Activated CD4-positive, alpha-beta T cell treated with anti-CD3 and anti-CD28 coated beads for 36 hours (primary cell): ENCODE measurements at regions of chr2 and their contacts with region 1.

Region 1: GRCh38 chr2:191637182-191638078 is 40.5 kb upstream of the NABP1 start:
- DNase-seq: no peak
- ATAC-seq: peak; percentile 85
- H3K4me3 Mint-ChIP-seq: peak overlapping the region; percentile 15
- H3K27ac Mint-ChIP-seq: peak overlapping the region; percentile 91
- H3K4me1 Mint-ChIP-seq: peaks cover 59% of the 10 kb centered on the region
- H3K27me3 Mint-ChIP-seq: no peaks in the 10 kb centered on the region

Region 2: DNA sequence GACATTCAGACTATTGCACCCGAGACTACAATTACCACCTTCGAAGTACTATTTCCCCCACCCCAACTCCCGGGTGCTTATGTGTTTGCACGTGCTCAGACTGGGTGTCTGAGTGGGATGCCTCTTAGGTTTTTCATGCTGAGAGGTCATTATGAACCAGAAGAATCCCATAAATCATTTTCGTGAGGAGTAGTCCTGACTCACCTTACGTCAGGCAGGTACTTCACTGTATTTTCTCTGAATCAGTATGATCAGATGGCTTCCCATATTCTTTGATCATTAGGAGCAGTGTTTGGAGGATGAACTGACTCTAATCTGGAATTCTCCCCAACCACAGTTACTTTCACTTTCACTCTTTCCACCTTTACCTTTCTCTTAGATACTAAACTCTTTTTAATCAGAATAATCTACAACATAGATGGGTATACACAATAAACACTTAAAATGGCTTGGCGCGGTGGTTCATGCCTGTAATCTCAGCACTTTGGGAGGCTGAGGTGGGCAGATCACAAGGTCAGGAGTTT is 448.3 kb before region 1 on chr2:
- CTCF ChIA-PET with region 1: no interaction called
- POLR2A ChIA-PET with region 1: interaction called, 3 read pairs
- intact Hi-C with region 1: loop called in 1 of 2 experiments (anchors 5 kb)
- DNase-seq: no peak
- ATAC-seq: no peak
- H3K4me3 Mint-ChIP-seq: peak overlapping the region; percentile 19
- H3K27ac Mint-ChIP-seq: peak overlapping the region; percentile 68
- H3K4me1 Mint-ChIP-seq: peaks cover 63% of the 10 kb centered on the region
- H3K27me3 Mint-ChIP-seq: no peaks in the 10 kb centered on the region

Region 3: DNA sequence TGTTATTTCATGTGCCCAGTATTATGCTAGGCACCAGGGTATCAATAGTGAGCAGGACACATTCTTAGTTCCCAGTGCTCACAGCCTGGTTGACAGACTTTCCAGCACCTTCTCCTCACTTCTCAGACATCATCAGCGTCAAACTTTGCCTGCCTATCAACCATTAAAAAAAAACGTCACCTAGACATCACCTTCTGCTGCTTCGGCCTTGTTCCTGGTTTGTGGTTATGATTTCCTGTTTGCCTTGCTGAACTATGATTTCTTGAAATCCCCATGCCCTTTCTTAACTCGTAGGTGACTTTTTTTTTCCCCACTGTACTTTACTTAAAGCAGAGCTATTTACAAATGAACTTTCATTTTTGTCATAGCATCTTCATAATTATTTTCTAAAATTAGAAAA is 19.9 kb before region 1 on chr2:
- CTCF ChIA-PET with region 1: interaction called, 19 read pairs
- POLR2A ChIA-PET with region 1: interaction called, 11 read pairs
- intact Hi-C with region 1: loop called (anchors 1 to 2 kb)
- DNase-seq: peak; percentile 61
- ATAC-seq: peak; percentile 80
- H3K4me3 Mint-ChIP-seq: peak overlapping the region; percentile 47
- H3K27ac Mint-ChIP-seq: peak overlapping the region; percentile 99
- H3K4me1 Mint-ChIP-seq: peaks cover 52% of the 10 kb centered on the region
- H3K27me3 Mint-ChIP-seq: no peaks in the 10 kb centered on the region

Region 4: DNA sequence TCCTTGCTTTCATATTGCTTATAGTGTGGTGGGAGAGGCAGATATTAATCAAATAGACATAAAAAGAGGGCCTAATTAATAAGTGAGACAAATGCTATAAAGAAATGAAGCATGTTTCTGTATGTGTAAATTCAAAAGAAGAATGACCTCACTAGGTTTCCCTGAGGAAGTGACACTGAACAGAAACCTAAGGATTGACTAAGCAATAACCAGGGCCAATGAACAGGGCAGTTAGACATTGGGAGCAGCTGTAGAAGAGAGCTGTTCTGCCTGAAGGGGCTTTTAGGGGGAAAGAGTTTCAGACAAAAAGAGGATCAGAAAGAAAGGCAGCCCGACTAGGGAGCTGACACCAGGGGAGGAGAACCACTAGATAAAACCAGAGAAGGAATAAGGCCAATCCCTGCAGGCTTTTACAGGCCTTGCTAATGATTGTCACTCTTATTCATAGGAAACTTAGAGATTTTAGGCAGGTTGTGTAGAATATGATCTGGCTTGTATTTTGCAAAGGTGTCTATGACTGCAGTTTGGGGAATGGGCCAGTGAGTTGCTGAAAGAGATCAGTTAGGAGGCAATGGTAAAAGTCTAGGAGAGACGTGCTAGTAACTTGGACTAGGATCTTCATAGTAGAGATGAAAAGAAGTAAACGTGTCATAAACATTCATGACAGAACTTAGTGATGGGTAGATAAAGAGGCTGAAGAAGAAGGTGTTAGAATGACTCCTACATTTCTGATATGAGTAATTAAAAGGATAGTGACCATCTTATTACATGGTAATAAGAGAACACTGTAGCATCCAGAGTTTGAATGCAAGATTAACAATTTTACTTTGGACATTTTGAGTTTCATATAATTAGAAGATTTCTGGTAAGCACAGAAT is 13.7 kb after region 1 on chr2:
- CTCF ChIA-PET with region 1: interaction called, 7 read pairs
- POLR2A ChIA-PET with region 1: no interaction called
- intact Hi-C with region 1: loop called in 1 of 2 experiments (anchors 2 kb)
- DNase-seq: peak; percentile 12
- ATAC-seq: peak; percentile 91
- H3K4me3 Mint-ChIP-seq: no peak overlapping the region
- H3K27ac Mint-ChIP-seq: peak overlapping the region; percentile 21
- H3K4me1 Mint-ChIP-seq: peaks cover 15% of the 10 kb centered on the region
- H3K27me3 Mint-ChIP-seq: no peaks in the 10 kb centered on the region

Region 5: DNA sequence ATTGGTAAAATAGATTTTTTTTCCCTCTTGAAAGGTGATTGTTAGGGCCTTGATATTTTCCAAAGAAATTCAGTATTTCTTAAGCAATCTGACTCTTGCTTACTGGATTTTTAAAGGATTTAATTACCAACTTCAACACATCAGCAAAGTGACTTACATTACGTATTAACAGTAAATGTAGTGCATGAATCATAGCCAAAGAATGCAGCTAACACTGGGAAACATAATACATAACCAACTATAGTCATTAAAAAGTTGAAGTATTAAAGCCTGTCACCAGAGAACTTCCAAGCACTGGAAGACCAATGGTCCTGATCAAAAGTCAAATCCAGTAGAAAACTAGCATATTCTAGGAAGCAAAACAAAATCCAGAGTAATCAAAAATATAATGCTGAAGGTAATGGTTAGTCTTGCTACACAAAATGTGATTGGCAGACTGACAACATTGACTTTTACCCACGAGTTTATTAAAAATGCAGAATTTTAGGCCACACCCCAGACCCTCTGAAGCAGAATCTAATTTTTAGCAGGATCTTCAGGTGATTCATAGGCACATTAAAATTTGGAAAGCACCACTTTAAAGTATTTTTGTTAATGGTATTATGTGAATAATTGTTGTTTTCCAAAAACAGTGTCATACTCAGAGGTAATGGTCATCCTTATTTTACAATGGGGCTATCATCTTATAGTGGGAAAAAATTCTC is 241.3 kb after region 1 on chr2:
- CTCF ChIA-PET with region 1: no interaction called
- POLR2A ChIA-PET with region 1: no interaction called
- intact Hi-C with region 1: no loop called
- DNase-seq: no peak
- ATAC-seq: no peak
- H3K4me3 Mint-ChIP-seq: no peak overlapping the region
- H3K27ac Mint-ChIP-seq: no peak overlapping the region
- H3K4me1 Mint-ChIP-seq: no peaks in the 10 kb centered on the region
- H3K27me3 Mint-ChIP-seq: peaks cover 2% of the 10 kb centered on the region